ENCODE measurements at regions of chr11 and their contacts with region 1.

Region 1: GRCh38 chr11:34886609-34887008 is 29.6 kb downstream of the APIP start:
- DNase-seq: no peak
- ATAC-seq: no peak

Region 2: DNA sequence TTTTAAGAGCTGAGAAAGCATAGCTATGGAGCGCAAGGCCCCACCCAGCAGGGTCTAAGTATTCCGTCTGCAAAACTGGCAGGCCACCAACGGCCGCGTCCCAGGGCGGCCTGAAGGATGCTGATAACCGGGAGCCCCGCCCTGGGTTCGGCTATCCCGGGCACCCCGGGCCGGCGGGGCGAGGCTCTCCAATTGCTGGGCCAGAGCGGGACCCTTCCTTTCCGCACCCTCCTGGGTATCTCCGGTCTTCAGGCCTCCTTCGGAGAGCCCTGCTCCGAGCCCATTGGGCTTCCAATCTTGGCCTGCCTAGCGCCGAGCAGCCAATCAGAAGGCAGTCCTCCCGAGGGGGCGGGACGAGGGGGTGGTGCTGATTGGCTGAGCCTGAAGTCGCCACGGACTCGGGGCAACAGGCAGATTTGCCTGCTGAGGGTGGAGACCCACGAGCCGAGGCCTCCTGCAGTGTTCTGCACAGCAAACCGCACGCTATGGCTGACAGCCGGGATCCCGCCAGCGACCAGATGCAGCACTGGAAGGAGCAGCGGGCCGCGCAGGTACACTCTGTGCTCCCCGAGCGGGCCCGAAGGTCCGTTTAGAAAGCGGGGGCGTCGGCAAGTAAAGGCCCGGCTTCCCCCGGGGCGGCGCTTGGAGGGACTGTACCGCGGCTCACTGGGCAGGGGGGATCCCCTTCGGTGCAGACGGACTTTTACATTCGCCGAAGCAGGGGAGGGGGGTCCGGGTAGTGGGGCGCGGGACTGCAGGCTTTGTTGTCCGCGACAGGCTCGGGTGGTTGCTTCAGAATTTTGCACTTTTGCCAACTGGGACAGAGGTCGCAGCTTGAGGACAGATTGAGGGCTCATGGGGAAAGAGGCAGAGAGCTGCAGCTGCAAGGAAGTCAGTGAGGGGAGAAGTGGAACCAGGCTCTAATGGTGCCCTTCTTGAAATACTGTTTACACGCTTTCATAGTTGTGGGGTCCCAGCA is 447.8 kb before region 1 on chr11 and contains the start of gene CAT:
- intact Hi-C with region 1: no loop called
- DNase-seq: peak; percentile 99
- ATAC-seq: peak; percentile 100
- total RNA-seq, gene CAT: 82.6 TPM

Region 3: GRCh38 chr11:34585735-34586487 is 300.7 kb before region 1 on chr11:
- intact Hi-C with region 1: loop called (anchors 10 kb)
- DNase-seq: no peak
- ATAC-seq: peak; percentile 82

Measured in sciatic nerve (tissue), 2 donors.